Activated T-helper 1 cell treated with anti-CD3 and anti-CD28 coated beads, Interleukin-12 subunit alpha, Interleukin-12 subunit beta, Interleukin-2, Interleukin-4 antibody, amounts not matched to agents 30 ng/mL and 10 ng/mL and 1 ng/mL, durations not matched to agents 14 hours and 24 hours and 36 hours (primary cell): ENCODE measurements at regions of chr5 and their contacts with region 1.

Region 1: DNA sequence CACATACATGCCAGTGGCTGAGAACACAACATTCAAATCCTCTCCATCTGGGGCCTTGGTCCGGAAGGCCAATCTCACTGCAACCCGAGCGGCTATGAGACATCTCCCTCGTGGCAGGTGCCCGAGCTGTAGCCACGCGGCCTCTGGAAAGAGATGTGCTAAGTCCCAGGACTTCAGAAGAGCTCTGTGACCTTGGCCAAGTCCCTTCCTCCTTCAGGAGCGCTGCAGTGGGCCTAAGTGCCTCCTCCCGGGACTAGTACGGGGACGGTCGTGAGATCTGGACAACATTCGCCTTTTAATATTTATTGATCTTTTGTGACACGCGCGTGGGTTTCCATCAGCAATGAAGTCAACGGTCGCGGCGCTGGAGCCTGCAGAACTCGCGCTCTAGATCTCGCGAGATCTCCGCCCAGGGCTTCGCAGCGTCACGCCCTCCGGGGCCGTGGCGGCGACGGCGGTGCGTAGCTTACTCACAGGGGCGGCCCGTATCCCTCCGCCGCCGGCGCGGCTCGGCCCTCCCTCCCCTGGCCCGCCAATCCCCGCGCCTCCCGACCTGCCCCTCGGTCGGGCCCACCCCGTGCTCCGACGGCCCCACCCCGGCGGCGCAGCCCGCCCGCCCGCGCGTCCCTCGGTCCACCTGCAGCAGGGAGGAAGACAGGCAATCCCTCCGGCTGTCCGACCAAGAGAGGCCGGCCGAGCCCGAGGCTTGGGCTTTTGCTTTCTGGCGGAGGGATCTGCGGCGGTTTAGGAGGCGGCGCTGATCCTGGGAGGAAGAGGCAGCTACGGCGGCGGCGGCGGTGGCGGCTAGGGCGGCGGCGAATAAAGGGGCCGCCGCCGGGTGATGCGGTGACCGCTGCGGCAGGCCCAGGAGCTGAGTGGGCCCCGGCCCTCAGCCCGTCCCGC is at the start of gene UBE2D2:
- DNase-seq: peak; percentile 97
- H3K4me3 Mint-ChIP-seq: peak within 1 kb of the TSS; percentile 98
- H3K27ac Mint-ChIP-seq: peak within 1 kb of the TSS; percentile 95
- H3K4me1 Mint-ChIP-seq: peaks cover 27% of the 10 kb centered on the region
- H3K27me3 Mint-ChIP-seq: no peaks in the 10 kb centered on the region
- total RNA-seq, gene UBE2D2: 251 and 265 TPM in 2 replicates

Region 2: DNA sequence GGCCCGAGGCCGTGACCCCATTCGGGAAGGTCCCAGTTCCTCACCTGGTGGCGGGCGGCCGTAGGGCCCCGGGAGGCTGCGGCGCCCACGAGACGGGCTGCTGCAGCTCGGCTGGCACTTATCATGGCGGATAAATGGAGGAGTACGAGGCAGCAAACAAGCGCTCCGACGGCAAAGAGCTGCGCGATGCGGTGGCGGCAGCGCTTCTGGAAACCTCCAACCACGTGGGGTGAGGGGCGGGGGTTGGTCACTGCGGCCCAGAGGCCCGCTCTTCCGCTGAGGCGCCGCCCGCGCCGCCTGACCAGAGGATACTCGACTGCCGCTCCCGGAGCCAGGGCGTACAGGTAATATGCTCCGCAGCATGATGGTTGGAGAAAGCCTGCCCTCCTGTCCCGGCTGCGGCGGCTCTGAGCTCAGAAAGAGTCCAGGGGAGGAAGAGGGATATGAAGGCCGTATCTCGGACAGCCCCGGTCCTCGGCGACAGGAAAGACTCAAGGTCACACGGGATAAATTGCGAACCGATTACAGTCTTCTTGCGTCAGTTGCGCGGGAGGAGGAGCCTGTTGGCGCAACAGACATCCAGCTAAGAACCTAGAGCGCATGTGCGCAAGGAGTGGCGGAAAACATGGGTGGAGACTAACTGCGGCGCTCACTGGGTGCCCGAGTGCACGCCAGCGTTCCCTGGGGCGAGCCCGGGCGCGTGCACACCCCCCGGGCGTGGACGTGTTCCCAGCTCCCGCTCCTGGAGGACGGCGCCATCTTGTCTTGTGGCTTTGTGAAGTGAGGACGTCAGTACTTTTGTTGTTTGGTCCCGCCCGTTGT is 985.6 kb before region 1 on chr5 and contains the start of gene HSPA9:
- intact Hi-C with region 1: loop called (anchors 2 kb)
- DNase-seq: peak; percentile 97
- H3K4me3 Mint-ChIP-seq: peak within 1 kb of the TSS; percentile 95
- H3K27ac Mint-ChIP-seq: peak within 1 kb of the TSS; percentile 100
- H3K4me1 Mint-ChIP-seq: peaks cover 22% of the 10 kb centered on the region
- H3K27me3 Mint-ChIP-seq: no peaks in the 10 kb centered on the region
- total RNA-seq, gene HSPA9: 372 and 383 TPM in 2 replicates

Region 3: GRCh38 chr5:139392678-139393496 is 168.1 kb before region 1 on chr5:
- intact Hi-C with region 1: loop called (anchors 2 kb)
- DNase-seq: peak; percentile 84
- H3K4me3 Mint-ChIP-seq: peak overlapping the region; percentile 96
- H3K27ac Mint-ChIP-seq: peak overlapping the region; percentile 95
- H3K4me1 Mint-ChIP-seq: peaks cover 58% of the 10 kb centered on the region
- H3K27me3 Mint-ChIP-seq: no peaks in the 10 kb centered on the region

Region 4: DNA sequence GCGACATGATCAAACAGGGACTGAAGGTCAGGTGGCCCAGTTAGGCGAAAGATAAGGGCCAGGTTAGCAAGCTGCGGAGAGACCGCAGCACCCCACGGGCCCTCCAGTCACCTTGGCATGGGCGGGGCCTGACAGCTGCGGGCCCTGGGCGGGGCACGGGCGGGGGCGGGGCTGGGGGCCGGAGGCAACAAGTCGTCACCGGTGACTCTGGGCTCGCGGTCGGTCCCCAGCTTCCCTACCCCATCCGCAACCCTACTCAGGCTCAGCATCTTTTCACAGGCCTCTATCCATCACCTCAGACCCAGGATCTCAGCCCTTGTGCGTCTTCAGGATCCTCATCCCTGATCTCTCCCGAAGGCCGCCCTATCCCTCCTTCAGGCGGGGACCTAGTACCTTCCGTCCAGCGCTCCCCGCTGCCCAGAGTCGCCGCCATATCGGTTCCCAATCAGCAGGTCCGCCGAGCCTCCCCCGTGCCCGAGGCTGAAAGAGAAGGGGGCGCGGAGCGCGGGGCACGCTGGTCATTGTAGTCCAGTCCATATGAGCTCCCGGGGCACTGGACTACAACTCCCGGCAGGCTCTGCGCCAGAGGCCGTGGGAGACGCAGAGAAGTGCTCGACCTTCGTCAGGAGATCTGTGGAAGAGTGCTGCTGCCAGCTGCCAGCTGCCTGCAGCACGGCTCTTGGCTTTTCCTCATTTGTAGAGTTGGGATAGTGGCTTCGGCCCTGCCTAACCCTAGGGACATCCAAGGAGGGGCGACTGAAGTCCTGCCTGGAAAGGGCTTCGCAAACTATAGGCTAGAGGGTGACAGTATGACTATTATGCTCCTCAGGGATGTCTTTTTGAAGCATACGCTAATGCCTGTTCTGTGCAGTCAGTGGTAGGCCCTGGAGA is 121.7 kb before region 1 on chr5 and contains the start of gene DNAJC18:
- intact Hi-C with region 1: loop called (anchors 1 kb)
- DNase-seq: peak; percentile 86
- H3K4me3 Mint-ChIP-seq: peak within 1 kb of the TSS; percentile 95
- H3K27ac Mint-ChIP-seq: peak within 1 kb of the TSS; percentile 99
- H3K4me1 Mint-ChIP-seq: peaks cover 66% of the 10 kb centered on the region
- H3K27me3 Mint-ChIP-seq: no peaks in the 10 kb centered on the region
- total RNA-seq, gene DNAJC18: 30.0 and 36.3 TPM in 2 replicates

Region 5: DNA sequence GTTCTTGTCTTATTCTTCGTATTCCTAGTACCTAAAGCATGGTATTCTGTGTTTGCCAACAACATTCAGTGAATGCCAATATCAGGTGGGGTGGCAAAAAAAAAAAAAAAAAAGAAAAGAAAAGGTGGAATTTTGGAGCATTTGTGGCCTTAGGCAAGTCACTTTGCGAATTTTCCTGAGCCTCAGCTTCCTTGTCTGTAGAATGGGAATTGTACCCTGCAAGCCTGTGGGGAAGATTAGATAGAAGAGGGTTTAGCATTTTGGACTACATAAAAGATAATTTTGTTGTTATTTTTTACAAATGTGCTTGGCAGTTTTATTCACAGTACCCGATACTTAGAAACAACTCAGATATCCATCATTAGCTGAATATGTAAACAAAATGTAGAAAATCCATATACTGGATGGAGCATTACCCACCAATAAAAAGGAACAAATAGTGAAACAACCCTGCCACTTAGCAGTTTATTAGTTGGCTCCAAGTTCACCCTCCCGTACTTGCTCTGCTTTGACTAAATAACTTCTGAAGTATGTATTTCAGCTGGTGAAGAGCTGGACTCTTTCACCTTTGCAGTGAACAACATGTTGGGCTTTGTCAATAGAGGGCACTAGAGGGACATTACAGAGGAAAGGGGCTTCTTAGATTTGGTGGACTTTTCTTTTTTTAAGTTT is 13.8 kb after region 1 on chr5:
- intact Hi-C with region 1: loop called (anchors 1 kb)
- DNase-seq: no peak
- H3K4me3 Mint-ChIP-seq: no peak overlapping the region
- H3K27ac Mint-ChIP-seq: no peak overlapping the region
- H3K4me1 Mint-ChIP-seq: peaks cover 64% of the 10 kb centered on the region
- H3K27me3 Mint-ChIP-seq: no peaks in the 10 kb centered on the region

Region 6: GRCh38 chr5:139619861-139620260 is 58.9 kb after region 1 on chr5:
- intact Hi-C with region 1: no loop called
- DNase-seq: no peak
- H3K4me3 Mint-ChIP-seq: no peak overlapping the region
- H3K27ac Mint-ChIP-seq: no peak overlapping the region
- H3K4me1 Mint-ChIP-seq: peaks cover 15% of the 10 kb centered on the region
- H3K27me3 Mint-ChIP-seq: no peaks in the 10 kb centered on the region

Region 7: DNA sequence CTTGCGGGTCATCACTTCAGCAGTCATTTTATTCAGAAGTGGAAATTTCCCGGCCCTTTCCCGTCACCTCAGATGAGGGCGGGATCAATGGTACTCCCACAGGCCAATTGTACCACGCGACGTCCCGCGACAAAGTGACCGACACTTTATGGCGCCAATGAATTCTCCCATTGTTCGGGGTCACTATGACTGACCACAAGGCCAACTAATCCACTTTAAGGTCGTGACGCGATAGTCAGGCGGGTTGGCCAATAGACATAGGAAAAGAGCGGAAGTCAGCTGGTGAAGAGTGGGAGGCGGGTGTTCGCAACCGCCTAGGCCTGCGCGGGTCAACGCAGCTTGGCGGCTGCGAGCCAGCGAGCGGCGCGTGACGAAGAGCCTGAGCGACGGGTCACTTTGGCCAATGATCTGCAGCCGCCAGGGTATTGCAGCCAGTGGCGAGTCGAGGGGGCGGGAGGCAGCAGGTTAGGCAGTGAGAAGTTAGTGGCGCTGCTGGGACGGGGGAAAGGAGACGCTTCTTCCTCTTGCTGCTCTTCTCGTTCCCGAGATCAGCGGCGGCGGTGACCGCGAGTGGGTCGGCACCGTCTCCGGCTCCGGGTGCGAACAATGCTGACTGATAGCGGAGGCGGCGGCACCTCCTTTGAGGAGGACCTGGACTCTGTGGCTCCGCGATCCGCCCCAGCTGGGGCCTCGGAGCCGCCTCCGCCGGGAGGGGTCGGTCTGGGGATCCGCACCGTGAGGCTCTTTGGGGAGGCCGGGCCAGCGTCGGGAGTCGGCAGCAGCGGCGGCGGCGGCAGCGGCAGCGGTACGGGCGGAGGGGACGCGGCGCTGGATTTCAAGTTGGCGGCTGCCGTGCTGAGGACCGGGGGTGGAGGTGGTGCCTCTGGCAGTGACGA is 840.6 kb after region 1 on chr5 and contains the start of gene ANKHD1:
- intact Hi-C with region 1: loop called (anchors 10 kb)
- DNase-seq: peak; percentile 96
- H3K4me3 Mint-ChIP-seq: no peak within 1 kb of the TSS
- H3K27ac Mint-ChIP-seq: peak within 1 kb of the TSS; percentile 88
- H3K4me1 Mint-ChIP-seq: peaks cover 24% of the 10 kb centered on the region
- H3K27me3 Mint-ChIP-seq: no peaks in the 10 kb centered on the region
- total RNA-seq, gene ANKHD1: 121 and 123 TPM in 2 replicates